ENCODE measurements at regions of chr16 and their contacts with region 1.

Region 1: GRCh38 chr16:72317446-72317845 is 145.5 kb upstream of the PMFBP1 start:
- DNase-seq: no peak
- ATAC-seq: no peak
- H3K4me3 ChIP-seq: no peak overlapping the region
- H3K27ac ChIP-seq: no peak overlapping the region
- H3K4me1 ChIP-seq: no peaks in the 10 kb centered on the region
- H3K27me3 ChIP-seq: no peaks in the 10 kb centered on the region

Region 2: DNA sequence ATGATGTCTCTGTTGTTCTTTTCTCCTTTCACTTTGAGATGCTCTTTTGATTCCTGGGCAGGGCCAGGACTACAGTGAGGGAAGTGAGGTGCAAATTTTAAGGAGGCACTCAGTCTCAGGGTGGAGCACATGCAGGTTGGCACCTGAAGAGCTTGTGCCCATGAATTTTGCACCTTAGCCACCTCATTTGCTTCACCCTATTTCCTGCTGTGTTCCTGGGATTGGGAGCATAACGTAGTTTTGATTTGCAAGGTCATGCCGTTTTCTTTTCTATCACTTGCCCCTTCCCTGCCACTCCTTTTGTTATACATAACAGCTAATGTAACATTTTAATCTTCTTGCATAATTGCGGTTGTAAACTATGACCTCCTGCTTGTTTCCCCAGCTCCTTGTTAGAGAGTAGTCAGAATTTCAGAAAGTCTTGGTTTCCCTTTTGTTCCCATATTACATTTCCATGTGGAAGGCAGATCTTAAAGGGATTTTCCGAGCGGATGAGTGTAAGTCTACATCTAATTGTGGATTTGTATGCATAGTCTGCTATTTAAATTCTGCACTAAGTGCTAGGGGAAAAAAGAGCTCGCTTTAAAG is 155.2 kb before region 1 on chr16:
- intact Hi-C with region 1: no loop called
- DNase-seq: no peak
- ATAC-seq: no peak
- H3K4me3 ChIP-seq: no peak overlapping the region
- H3K27ac ChIP-seq: no peak overlapping the region
- H3K4me1 ChIP-seq: no peaks in the 10 kb centered on the region
- H3K27me3 ChIP-seq: no peaks in the 10 kb centered on the region

Region 3: DNA sequence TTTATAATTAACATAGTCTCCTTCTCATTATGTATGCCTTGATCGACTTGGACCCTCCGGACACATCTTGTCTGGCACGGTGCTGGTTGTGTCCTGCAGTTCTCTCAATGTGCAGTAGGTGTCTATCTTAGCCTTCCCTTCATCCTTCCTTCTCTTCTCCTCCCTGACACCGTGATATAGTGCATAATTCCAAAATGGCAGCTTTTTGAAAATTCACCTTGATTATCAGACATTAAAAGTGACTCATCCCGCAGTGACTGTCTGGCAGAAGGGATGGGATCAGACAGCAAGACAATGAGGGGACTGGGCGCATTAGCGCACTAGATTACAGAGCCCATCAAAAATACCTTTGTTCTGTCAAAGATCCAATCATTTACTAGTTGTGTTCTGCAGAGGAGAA is 75.5 kb before region 1 on chr16:
- intact Hi-C with region 1: loop called in 1 of 2 experiments (anchors 10 kb)
- DNase-seq: no peak
- ATAC-seq: no peak
- H3K4me3 ChIP-seq: no peak overlapping the region
- H3K27ac ChIP-seq: no peak overlapping the region
- H3K4me1 ChIP-seq: no peaks in the 10 kb centered on the region
- H3K27me3 ChIP-seq: peaks cover 0 to 1% of the 10 kb centered on the region in 2 donors

Region 4: DNA sequence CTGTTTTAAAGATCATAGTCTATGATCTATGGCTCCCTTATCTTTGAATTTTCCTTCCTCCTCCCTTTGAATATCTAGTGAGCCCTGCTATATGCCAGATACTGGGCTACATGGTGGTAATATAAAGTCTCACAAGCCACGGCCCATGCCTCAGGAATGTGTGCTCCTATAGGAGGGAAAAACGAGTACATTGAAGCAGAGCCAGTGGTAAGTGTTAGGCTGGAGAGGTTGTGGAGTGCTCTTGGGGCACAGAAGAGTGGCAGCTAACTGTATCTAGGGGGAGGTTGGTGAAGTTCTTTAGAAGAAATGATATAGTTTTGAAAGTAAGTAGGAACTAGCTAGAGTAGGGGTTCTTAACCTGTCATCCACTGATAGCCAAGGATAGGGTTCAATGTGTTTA is 39.7 kb before region 1 on chr16:
- intact Hi-C with region 1: no loop called
- DNase-seq: no peak
- ATAC-seq: no peak
- H3K4me3 ChIP-seq: no peak overlapping the region
- H3K27ac ChIP-seq: no peak overlapping the region
- H3K4me1 ChIP-seq: no peaks in the 10 kb centered on the region
- H3K27me3 ChIP-seq: no peaks in the 10 kb centered on the region

Measured in aorta (tissue), 5 donors.